HepG2 (cell line): ENCODE measurements at regions of chr3 and their contacts with region 1.

Region 1: GRCh38 chr3:32667122-32667521 is 17.9 kb upstream of the CNOT10 start:
- DNase-seq: no peak
- ATAC-seq: peak; percentile 48
- H3K4me3 ChIP-seq: no peak overlapping the region
- H3K27ac ChIP-seq: no peak overlapping the region
- H3K4me1 ChIP-seq: peaks cover 31% of the 10 kb centered on the region
- H3K27me3 ChIP-seq: peaks cover 0 to 11% of the 10 kb centered on the region in 2 experiments; a peak in 1 of 5 replicates
- CTCF ChIP-seq: no peak
- EP300 ChIP-seq: no peak
- POLR2A ChIP-seq: no peak
- RAD21 ChIP-seq: no peak

Region 2: DNA sequence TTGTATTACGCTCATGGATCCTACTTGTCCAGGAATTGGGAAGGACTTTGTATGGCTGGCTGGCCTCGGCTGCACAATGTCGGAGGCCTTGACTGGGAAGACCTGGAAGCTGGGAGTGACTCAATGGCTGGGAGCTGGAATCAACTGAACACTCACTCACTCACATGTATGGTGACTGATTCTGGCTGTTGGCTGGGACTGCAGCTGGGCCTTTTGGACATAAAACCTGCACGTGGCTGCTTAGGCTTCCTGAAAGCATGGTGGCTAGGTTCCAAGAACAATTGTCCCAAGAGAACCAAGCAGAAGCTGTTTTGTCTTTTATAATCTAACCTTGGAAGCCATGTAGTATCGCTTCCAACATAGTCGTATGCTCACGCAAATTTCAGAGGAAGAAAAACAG is 466.6 kb before region 1 on chr3:
- CTCF ChIA-PET with region 1: no interaction called
- POLR2A ChIA-PET with region 1: no interaction called
- in situ Hi-C with region 1: loop called (anchors 25 kb)
- intact Hi-C with region 1: no loop called
- DNase-seq: no peak
- ATAC-seq: peak; percentile 64
- H3K4me3 ChIP-seq: no peak overlapping the region
- H3K27ac ChIP-seq: no peak overlapping the region
- H3K4me1 ChIP-seq: peaks cover 22% of the 10 kb centered on the region
- H3K27me3 ChIP-seq: peaks cover 0 to 2% of the 10 kb centered on the region in 2 experiments; a peak in 1 of 5 replicates
- CTCF ChIP-seq: no peak
- EP300 ChIP-seq: no peak
- POLR2A ChIP-seq: no peak
- RAD21 ChIP-seq: no peak

Region 3: DNA sequence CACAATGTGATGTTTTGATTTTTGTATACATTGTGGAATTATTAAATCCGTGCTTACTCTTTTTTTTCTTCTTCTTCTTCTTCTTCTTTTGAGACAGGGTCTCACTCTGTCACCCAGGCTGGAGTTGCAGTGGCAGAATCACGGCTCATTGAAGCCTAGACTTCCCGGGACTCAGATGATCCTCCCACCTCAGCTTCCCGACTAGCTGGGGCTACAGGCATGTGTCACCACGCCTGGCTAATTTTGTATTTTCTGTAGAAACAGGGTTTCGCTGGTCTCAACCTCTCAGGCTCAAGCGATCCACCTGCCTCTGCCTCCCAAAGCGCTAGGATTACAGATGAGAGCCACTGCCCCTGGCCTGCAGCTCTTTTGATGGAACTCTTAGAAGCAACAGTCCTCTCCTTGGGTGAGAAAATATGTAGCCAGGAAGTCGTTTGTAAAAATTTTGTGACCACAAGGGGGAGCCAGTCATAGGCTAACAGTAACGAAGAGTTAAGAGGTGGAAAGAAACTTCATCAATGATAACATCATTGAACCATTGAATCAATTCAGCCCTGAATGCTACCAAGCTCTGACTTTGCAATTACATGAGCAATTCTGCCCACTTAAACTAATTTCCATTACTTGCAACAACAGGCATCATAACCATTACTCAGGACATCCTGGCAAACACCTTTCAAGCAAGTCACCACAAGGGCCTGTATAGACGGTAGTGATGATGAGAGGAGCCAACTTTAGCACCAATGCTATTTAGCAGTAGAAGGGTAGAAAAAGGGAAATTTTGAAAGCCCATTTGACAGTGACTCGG is 292.1 kb before region 1 on chr3:
- CTCF ChIA-PET with region 1: interaction called, 3 read pairs
- POLR2A ChIA-PET with region 1: no interaction called
- in situ Hi-C with region 1: no loop called
- intact Hi-C with region 1: loop called (anchors 5 kb)
- DNase-seq: peak; percentile 63
- ATAC-seq: peak; percentile 88
- H3K4me3 ChIP-seq: no peak overlapping the region
- H3K27ac ChIP-seq: no peak overlapping the region
- H3K4me1 ChIP-seq: 0 out of 2 replicates have a peak, but pooled peaks cover under 1% of the 10 kb centered on the region
- H3K27me3 ChIP-seq: no peaks in the 10 kb centered on the region
- CTCF ChIP-seq: peak; percentile 72
- EP300 ChIP-seq: no peak
- POLR2A ChIP-seq: no peak
- RAD21 ChIP-seq: no peak

Region 4: DNA sequence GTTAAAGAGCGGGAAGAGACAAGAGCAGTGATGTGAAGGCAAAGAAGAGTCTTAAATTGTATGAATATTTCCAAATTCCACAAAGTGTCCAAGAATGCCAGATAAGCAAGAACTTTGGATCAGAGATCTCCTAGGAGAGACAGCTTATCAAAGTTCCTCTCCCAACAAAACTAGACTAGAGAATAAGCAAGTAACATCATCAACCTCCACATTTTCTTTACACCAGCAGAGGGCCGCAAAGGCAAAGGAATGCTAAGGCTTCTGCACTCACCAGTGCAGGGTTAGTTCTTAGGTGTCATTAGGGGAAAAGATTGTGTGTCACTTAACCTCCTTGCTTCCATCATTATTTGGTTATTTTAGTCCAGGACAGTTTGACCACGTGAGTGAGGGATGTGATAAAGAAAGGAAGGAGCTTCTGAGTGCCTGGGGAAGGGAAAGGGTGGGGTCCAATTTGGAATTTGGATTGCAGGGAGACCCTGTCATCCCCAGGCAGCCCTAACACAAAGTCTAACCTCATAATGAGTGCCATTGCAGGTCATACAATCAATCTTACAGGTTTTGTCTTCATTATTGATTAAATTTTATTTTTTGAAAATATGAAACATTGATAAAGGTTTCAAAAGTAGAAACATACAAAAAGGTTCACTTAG is 156.9 kb before region 1 on chr3:
- CTCF ChIA-PET with region 1: interaction called, 21 read pairs
- POLR2A ChIA-PET with region 1: no interaction called
- in situ Hi-C with region 1: loop called (anchors 5 kb)
- intact Hi-C with region 1: loop called (anchors 2 kb)
- DNase-seq: peak; percentile 71
- ATAC-seq: peak; percentile 98
- H3K4me3 ChIP-seq: no peak overlapping the region
- H3K27ac ChIP-seq: no peak overlapping the region
- H3K4me1 ChIP-seq: peaks cover 9% of the 10 kb centered on the region
- H3K27me3 ChIP-seq: peaks cover 0 to 1% of the 10 kb centered on the region in 2 experiments; a peak in 1 of 5 replicates
- CTCF ChIP-seq: peak; percentile 92
- EP300 ChIP-seq: no peak
- POLR2A ChIP-seq: no peak
- RAD21 ChIP-seq: peak; percentile 88

Region 5: GRCh38 chr3:32831791-32832190 is 164.7 kb after region 1 on chr3:
- CTCF ChIA-PET with region 1: no interaction called
- POLR2A ChIA-PET with region 1: no interaction called
- in situ Hi-C with region 1: no loop called
- intact Hi-C with region 1: no loop called
- DNase-seq: no peak
- ATAC-seq: no peak
- H3K4me3 ChIP-seq: no peak overlapping the region
- H3K27ac ChIP-seq: no peak overlapping the region
- H3K4me1 ChIP-seq: peaks cover 100% of the 10 kb centered on the region
- H3K27me3 ChIP-seq: no peaks in the 10 kb centered on the region
- CTCF ChIP-seq: no peak
- EP300 ChIP-seq: no peak
- POLR2A ChIP-seq: no peak
- RAD21 ChIP-seq: no peak